GM10248 (cell line): ENCODE measurements at regions of chr3 and their contacts with region 1.

Region 1: GRCh38 chr3:53219895-53220483 is 35.8 kb downstream of the TKT start:
- DNase-seq: peak; percentile 86
- CTCF ChIP-seq: peak; percentile 80

Region 2: GRCh38 chr3:53072653-53073552 is 147.1 kb before region 1 on chr3:
- CTCF ChIA-PET with region 1: no interaction called
- POLR2A ChIA-PET with region 1: no interaction called
- DNase-seq: peak; percentile 91
- CTCF ChIP-seq: peak; percentile 94

Region 3: DNA sequence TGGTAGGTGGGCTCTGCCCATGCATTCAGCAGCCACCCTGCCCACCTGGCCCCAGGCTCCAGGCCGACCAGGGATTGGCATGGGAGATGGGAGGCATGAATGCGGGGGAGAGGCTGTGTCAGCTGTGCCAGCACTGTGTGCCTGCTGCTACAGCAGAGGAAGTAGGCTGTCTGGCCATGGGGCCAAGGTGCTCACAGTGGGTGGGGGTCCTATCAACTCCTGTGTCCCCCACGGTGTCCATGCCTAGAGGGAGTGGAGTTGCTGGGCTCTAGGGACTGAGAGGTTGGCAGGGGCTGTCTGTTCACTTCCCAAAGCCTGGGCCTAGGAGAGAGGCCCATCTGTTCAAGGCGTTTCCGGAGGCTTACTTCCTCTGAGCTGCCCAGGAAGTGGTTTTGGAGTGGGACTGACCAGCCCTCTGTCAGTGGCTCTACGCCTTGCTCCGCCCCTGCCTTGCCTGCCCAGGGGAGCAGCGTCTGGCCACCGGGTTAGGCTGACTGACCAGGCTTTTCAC is 53.2 kb before region 1 on chr3:
- CTCF ChIA-PET with region 1: no interaction called
- POLR2A ChIA-PET with region 1: interaction called, 10 read pairs
- DNase-seq: no peak
- CTCF ChIP-seq: no peak